Activated naive CD4-positive, alpha-beta T cell treated with anti-CD3 and anti-CD28 coated beads, Interleukin-2, amount 10 ng/mL, durations not matched to agents 7 days and 5 days (primary cell): ENCODE measurements at regions of chr10 and their contacts with region 1.

Region 1: GRCh38 chr10:96229568-96230030 is 41.8 kb downstream of the BLNK start:
- DNase-seq: peak; percentile 77
- H3K4me3 Mint-ChIP-seq: no peak overlapping the region
- H3K27ac Mint-ChIP-seq: peak overlapping the region; percentile 24
- H3K4me1 Mint-ChIP-seq: no peaks in the 10 kb centered on the region
- H3K27me3 Mint-ChIP-seq: peaks cover 4% of the 10 kb centered on the region

Region 2: DNA sequence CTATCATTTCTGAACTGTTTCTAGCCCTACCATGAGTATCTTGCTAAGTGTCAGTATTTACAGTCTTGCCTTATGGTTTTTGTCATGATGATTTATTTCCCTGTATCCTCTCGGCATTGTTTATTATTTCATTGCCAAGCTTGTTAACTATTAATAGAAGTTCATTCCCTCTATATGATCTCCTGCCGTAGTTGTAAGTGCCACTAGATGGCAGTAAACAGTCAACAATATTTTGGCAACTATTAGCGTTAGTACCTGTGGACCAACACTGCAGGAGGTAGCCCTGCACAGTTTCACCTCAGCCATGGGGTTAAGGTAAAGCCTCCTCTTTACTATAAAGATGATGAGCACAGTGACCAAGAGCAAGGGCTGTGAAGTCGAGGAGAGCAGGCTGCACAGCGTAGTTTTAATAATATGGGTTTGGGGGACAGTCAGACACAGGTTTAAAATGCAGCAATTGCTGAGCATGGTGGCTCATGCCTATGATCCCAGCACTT is 212.4 kb before region 1 on chr10:
- CTCF ChIA-PET with region 1: interaction called, 37 read pairs
- DNase-seq: peak; percentile 42
- H3K4me3 Mint-ChIP-seq: no peak overlapping the region
- H3K27ac Mint-ChIP-seq: no peak overlapping the region
- H3K4me1 Mint-ChIP-seq: no peaks in the 10 kb centered on the region
- H3K27me3 Mint-ChIP-seq: no peaks in the 10 kb centered on the region

Region 3: GRCh38 chr10:96287392-96288105 is 58.0 kb after region 1 on chr10:
- CTCF ChIA-PET with region 1: interaction called, 135 read pairs
- DNase-seq: no peak
- H3K4me3 Mint-ChIP-seq: no peak overlapping the region
- H3K27ac Mint-ChIP-seq: peak overlapping the region; percentile 25
- H3K4me1 Mint-ChIP-seq: peaks cover 16% of the 10 kb centered on the region
- H3K27me3 Mint-ChIP-seq: no peaks in the 10 kb centered on the region

Region 4: DNA sequence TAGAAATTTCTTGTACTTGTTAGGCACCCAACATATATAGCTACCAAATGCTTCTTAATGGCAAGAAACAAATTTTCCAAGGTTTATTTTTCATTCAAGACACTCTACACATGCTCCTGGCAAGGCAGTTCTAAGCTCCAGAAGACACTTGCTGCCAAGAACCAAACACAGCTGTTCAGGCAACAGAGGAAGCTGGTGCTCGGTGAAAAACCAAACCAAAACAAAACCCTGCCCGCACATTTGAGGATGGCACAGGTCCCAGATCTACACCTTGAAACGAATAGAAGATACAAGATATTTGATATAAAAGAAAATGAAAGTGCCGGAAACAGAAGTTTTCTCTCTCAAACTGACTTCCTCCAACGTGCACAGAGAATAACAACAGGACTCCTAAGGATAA is 69.8 kb after region 1 on chr10:
- CTCF ChIA-PET with region 1: interaction called, 135 read pairs
- DNase-seq: peak; percentile 33
- H3K4me3 Mint-ChIP-seq: peak overlapping the region; percentile 11
- H3K27ac Mint-ChIP-seq: peak overlapping the region; percentile 75
- H3K4me1 Mint-ChIP-seq: peaks cover 22% of the 10 kb centered on the region
- H3K27me3 Mint-ChIP-seq: peaks cover 3% of the 10 kb centered on the region

Region 5: DNA sequence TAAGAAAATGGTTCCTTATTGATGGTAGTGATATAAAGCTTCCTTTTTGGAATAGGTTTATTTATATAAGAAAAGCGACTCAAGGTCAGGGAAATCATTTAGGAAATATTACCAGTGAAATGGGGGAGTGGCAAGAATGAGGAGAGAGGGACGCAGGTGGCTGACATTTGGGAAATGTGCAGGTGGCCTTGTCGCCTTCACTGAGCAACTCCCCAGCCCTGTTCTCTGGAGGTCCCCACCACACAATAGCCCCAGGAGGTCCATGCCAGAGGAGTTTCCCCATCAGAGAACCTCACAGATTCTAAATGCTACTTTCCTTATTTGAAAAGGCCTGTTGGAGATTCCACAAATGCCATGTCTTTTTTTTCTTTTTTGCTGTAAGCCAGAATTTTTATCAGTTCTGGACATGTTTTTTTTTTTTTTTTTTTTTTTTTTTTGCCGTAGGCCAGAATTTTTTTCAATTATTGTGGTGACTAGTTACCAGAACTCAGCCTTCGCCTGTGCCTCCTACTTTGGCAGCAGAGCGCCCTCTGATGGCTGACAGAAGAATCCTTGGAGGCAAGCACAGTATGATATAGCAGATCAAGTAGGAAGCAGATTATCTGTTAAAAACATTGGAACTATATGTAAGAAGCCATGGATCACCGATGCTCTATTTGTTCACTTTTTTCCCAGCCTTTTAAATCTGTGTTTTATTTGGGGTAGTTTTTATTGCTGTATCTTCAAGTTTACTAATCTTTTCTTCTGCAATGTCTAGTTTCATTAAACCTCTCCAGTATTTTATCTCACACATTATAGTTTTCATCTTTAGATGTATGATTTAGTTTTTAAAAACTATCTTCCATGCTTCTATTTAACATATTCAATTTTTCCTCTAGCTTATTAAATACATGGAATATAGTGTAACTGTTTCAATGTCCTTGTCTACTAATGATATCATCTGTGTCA is 110.6 kb after region 1 on chr10:
- CTCF ChIA-PET with region 1: interaction called, 45 read pairs
- DNase-seq: peak; percentile 73
- H3K4me3 Mint-ChIP-seq: no peak overlapping the region
- H3K27ac Mint-ChIP-seq: no peak overlapping the region
- H3K4me1 Mint-ChIP-seq: no peaks in the 10 kb centered on the region
- H3K27me3 Mint-ChIP-seq: peaks cover 18% of the 10 kb centered on the region